Endothelial cell of umbilical vein (primary cell): ENCODE measurements at regions of chr2 and their contacts with region 1.

Region 1: DNA sequence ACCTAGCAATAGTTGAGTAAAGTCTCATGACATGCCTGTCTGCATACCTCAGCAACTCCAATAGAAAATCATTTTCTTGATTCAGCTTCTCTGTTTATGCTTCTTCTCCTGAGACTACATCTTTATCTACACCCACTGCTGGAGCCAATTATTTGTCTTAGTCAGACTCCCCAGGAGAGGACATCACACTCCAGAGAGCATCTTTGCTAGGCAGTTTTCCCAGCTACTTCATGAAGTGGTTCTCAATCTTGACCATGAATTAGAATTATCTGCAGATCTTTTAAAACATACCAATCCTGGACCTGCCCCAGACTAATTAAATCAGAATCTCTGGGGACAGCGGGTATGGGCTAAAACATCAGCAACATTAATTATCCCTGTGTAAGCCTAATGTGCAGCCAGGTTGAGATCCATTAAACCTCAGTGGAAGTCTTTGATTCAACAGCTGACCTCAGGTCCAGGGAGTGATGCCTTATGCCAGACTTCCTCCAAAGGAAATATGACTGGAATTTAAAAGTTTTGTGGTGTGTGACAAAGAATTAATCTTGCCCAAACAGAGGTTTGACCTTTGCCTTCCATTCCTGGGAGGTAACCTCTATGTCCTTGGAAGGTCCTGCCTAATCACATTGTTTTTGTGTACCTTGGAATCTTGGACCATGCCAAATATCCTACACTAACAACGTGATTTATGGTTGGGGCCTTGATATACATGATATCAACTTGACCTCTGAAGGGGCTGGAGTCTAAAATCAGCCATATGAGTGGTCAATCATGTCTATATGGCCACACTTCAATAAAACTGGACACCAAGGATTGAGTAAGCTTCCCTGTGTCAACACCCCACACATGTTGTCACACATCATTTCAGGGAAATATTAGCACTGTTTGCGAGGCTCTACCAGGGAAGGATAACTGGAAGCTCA is 99.3 kb upstream of the DNAJC10 start:
- DNase-seq: peak; percentile 96
- H3K4me3 ChIP-seq: no peak overlapping the region
- H3K27ac ChIP-seq: peak overlapping the region; percentile 79
- H3K4me1 ChIP-seq: peaks cover 30% of the 10 kb centered on the region
- H3K27me3 ChIP-seq: no peaks in the 10 kb centered on the region
- CTCF ChIP-seq: no peak
- POLR2A ChIP-seq: peak; percentile 66

Region 2: GRCh38 chr2:182404975-182405561 is 211.7 kb before region 1 on chr2:
- CTCF ChIA-PET with region 1: no interaction called
- POLR2A ChIA-PET with region 1: no interaction called
- dilution Hi-C with region 1: no loop called
- intact Hi-C with region 1: loop called (anchors 1 kb)
- DNase-seq: peak; percentile 42
- H3K4me3 ChIP-seq: no peak overlapping the region
- H3K27ac ChIP-seq: peak overlapping the region; percentile 29
- H3K4me1 ChIP-seq: peaks cover 20% of the 10 kb centered on the region
- H3K27me3 ChIP-seq: no peaks in the 10 kb centered on the region
- CTCF ChIP-seq: no peak
- POLR2A ChIP-seq: no peak

Region 3: GRCh38 chr2:182545420-182546167 is 71.1 kb before region 1 on chr2:
- CTCF ChIA-PET with region 1: no interaction called
- POLR2A ChIA-PET with region 1: no interaction called
- dilution Hi-C with region 1: no loop called
- intact Hi-C with region 1: loop called (anchors 5 kb)
- DNase-seq: peak; percentile 65
- H3K4me3 ChIP-seq: no peak overlapping the region
- H3K27ac ChIP-seq: peak overlapping the region; percentile 22
- H3K4me1 ChIP-seq: peaks cover 53% of the 10 kb centered on the region
- H3K27me3 ChIP-seq: no peaks in the 10 kb centered on the region
- CTCF ChIP-seq: no peak
- POLR2A ChIP-seq: no peak